ENCODE measurements at regions of chr1 and their contacts with region 1.

Region 1: DNA sequence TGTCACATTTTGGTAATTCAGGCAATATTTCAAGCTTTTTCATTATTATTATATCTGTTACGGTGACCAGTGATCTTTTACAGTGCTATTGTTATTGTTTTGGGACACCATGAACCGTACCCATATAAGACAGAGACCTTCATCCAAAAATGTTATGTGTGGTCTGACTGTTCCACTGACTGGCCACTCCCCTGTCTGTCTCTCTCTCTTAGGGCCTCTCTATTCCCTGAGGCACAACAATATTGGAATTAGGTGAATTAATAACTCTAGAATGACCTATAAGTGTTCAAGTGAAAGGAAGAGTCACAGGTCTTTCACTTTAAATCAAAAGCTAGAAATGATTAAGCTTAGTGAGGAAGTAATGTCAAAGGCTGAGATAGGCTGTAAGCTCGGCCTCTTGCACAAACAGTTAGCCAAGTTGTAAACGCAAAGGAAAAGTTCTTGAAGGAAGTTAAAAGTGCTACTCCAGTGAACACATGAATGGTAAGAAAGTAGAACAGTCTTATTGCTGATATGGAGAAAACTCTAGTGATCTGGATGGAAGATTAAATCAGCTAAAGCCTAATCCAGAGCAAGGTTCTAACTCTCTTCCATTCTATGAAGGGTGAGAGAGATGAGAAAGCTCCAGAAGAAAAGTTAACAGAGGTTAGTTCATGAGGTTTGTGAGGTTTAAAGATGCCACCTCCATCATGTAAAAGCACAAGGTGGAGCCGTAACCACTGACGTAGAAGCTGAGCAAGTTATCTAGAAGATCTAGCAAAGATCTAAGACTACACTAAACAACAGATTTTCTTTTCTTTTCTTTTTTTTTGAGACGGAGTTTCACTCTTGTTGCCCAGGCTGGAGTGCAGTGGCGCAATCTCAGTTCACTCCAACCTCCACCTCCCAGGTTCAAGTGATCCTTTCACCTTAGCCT is 19.7 kb upstream of the DIPK1A start:
- DNase-seq: peak; percentile 9 to 86 (median 82)
- H3K4me3 ChIP-seq: peak overlapping the region; percentile 2
- H3K4me3 Mint-ChIP-seq: peak overlapping the region; percentile 4 to 77 (median 68)
- H3K27ac ChIP-seq: peak overlapping the region; percentile 32
- H3K27ac Mint-ChIP-seq: peak overlapping the region; percentile 88 to 99 (median 96)
- H3K4me1 ChIP-seq: peaks cover 27% of the 10 kb centered on the region
- H3K4me1 Mint-ChIP-seq: peaks cover 22 to 50% (median 39%) of the 10 kb centered on the region in 3 donors
- H3K27me3 ChIP-seq: no peaks in the 10 kb centered on the region
- H3K27me3 Mint-ChIP-seq: no peaks in the 10 kb centered on the region

Region 2: DNA sequence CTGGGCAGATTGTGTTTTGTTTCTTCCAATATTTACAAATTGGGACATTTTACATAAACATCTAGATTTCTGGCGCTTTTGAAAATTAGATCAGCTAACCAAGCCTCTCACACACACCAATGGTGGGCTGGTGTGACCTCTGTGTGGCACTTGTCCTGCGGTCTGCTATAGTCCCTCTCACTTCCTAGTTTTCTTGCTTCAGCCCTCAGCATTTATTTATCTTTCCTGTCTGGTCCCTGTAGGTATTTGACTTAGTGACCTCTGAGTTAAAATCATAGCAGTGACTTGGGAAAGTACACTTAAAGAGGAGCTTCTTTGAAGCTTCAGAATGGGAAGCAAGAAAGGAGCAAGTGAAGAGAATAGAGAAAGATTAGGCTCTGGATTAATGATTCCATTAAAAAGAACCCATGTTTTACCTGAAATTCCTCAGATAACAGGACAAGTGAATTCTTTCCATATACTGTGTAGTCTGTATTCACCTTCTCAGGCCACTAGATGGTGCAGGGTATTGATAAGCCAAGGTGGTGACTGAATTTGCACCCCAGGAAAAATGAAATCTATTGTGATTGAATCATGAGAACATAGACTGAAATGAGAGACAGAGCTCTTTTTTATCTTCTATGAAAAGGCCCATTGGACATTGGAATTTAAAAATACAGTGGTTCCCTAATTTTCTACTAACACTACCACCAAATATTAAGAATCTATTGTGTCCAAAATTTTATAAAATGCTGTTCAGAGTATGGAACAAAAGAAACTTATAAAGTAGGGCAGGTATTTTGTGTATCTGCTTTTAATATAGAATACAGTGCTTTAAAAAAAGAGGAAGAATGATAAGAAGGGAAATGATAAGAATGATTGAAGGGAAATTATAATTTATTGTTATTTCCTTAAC is 12.6 kb before region 1 on chr1:
- CTCF ChIA-PET with region 1: interaction called, 37 read pairs
- POLR2A ChIA-PET with region 1: interaction called, 32 read pairs
- DNase-seq: peak in 2 of 5 donors; percentile 32
- H3K4me3 ChIP-seq: no peak overlapping the region
- H3K4me3 Mint-ChIP-seq: no peak overlapping the region
- H3K27ac ChIP-seq: no peak overlapping the region
- H3K27ac Mint-ChIP-seq: peak overlapping the region in 3 of 8 donors; percentile 8 to 83 (median 18)
- H3K4me1 ChIP-seq: peaks cover 49% of the 10 kb centered on the region
- H3K4me1 Mint-ChIP-seq: peaks cover 19 to 29% (median 26%) of the 10 kb centered on the region in 3 donors
- H3K27me3 ChIP-seq: no peaks in the 10 kb centered on the region
- H3K27me3 Mint-ChIP-seq: no peaks in the 10 kb centered on the region

Measured in CD8-positive, alpha-beta memory T cell (primary cell).